CD4-positive, alpha-beta T cell (primary cell): ENCODE measurements at regions of chr1 and their contacts with region 1.

Region 1: GRCh38 chr1:230642263-230642959 is at the start of gene COG2:
- DNase-seq: peak; percentile 85 to 99 (median 96)
- ATAC-seq: peak; percentile 88
- H3K4me3 ChIP-seq: peak within 1 kb of the TSS; percentile 99
- H3K4me3 Mint-ChIP-seq: peak within 1 kb of the TSS; percentile 96
- H3K27ac ChIP-seq: peak within 1 kb of the TSS; percentile 64 to 78
- H3K27ac Mint-ChIP-seq: peak within 1 kb of the TSS; percentile 87
- H3K4me1 ChIP-seq: peaks cover 44% of the 10 kb centered on the region
- H3K4me1 Mint-ChIP-seq: peaks cover 54% of the 10 kb centered on the region
- H3K27me3 ChIP-seq: peaks cover 0 to 7% of the 10 kb centered on the region in 2 experiments
- H3K27me3 Mint-ChIP-seq: peaks cover 26% of the 10 kb centered on the region
- CTCF ChIP-seq: peak; percentile 100
- total RNA-seq, gene COG2: 17.3 to 21.4 TPM

Region 2: DNA sequence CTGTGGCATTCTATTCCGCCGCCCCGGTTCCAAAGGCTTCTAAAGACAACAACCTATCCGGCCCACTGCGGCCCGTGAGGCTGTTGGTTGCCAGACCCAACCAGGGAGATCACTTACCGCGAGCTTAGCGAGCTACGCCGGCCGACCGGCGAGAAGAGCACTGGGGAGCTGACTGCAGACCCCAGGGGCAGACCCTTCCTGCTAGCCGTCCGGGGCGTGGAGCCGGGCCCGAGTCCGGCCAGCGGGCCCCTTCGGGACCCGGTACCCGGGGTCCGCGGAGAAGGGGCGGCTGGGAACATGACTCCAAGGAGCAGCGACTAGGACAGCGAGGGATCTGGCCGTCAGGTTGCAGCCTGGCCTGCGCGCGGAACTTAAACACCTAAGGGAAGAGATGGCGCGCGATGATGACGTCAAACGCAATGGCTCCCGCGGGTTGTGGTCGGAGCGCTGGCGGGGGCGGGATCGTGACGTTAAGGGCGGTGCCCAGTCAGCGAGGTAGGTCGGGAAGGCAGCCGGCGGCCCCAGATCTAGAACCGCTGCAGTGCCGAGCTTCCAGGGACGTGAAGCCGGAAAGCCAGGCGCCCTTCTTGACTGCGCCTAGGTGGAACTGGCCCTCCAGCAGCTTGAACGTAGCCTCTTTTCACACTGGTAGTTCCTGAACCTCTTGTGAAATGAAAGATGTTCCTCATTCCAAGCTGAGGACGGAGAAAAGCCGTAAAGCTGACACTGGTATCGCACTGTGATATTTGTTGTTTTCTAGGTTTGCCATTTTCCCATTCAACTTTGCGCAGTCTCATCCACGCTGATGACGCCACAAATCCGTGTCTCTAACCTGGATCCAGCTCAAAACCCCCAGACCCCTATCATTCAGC is 1134.2 kb before region 1 on chr1 and contains the start of gene NUP133:
- CTCF ChIA-PET with region 1: no interaction called
- POLR2A ChIA-PET with region 1: interaction called, 3 read pairs
- intact Hi-C with region 1: loop called in 1 of 2 experiments (anchors 5 kb)
- DNase-seq: peak; percentile 96 to 100 (median 98)
- ATAC-seq: peak; percentile 97
- H3K4me3 ChIP-seq: peak within 1 kb of the TSS; percentile 98
- H3K4me3 Mint-ChIP-seq: peak within 1 kb of the TSS; percentile 97
- H3K27ac ChIP-seq: peak within 1 kb of the TSS; percentile 90 to 93
- H3K27ac Mint-ChIP-seq: peak within 1 kb of the TSS; percentile 97
- H3K4me1 ChIP-seq: peaks cover 19% of the 10 kb centered on the region
- H3K4me1 Mint-ChIP-seq: peaks cover 33% of the 10 kb centered on the region
- H3K27me3 ChIP-seq: no peaks in the 10 kb centered on the region
- H3K27me3 Mint-ChIP-seq: no peaks in the 10 kb centered on the region
- CTCF ChIP-seq: no peak
- total RNA-seq, gene NUP133: 42.0 to 45.3 TPM

Region 3: DNA sequence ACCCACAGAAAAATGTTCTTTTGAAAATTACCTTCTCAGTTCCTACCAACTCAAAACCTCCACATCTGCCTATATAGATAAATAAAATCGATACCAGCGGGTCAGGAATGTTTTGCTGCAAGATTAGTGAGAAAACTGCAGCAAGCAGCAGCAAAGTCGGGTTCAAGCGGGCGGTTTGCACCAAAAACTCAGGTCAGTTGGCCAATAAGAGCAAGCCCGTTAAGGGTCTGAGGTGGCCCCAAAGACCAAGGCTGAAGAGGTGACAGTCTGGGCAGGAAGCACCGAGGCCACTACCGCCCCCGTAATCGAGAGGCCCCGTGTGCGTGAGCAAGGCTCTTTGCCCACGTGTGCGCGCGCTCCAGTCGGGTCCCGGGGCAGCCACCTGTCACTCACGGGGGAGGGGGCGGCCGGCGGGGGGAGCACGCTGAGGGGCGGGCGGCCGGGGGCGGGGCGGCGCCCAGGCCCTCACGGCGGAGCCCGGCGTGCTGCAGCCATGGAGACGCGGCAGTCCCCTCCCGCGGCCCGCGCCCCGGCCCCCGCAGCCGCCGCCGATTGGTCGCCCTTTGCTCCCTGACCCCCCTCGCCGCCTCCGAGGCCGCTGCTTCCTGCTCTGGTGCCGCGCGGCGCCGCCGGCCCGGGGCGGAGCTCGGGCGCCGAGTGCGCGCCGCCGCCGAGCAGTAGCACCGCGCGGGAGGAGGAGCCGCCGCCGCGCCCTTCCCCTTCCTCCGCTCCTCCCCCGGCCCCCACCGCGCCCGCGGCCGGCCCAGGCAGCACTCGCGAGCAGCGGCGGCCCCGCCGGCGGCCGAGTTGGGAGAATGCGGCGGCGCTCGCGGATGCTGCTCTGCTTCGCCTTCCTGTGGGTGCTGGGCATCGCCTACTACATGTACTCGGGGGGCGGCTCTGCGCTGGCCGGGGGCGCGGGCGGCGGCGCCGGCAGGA is 575.7 kb before region 1 on chr1 and contains the start of gene GALNT2:
- CTCF ChIA-PET with region 1: no interaction called
- POLR2A ChIA-PET with region 1: no interaction called
- intact Hi-C with region 1: loop called in 1 of 2 experiments (anchors 10 kb)
- DNase-seq: peak; percentile 74 to 97 (median 86)
- ATAC-seq: peak; percentile 91
- H3K4me3 ChIP-seq: peak within 1 kb of the TSS; percentile 85
- H3K4me3 Mint-ChIP-seq: peak within 1 kb of the TSS; percentile 97
- H3K27ac ChIP-seq: peak within 1 kb of the TSS; percentile 46 to 73
- H3K27ac Mint-ChIP-seq: peak within 1 kb of the TSS; percentile 93
- H3K4me1 ChIP-seq: peaks cover 15% of the 10 kb centered on the region
- H3K4me1 Mint-ChIP-seq: peaks cover 42% of the 10 kb centered on the region
- H3K27me3 ChIP-seq: no peaks in the 10 kb centered on the region
- H3K27me3 Mint-ChIP-seq: no peaks in the 10 kb centered on the region
- CTCF ChIP-seq: no peak
- total RNA-seq, gene GALNT2: 11.0 to 11.4 TPM

Region 4: DNA sequence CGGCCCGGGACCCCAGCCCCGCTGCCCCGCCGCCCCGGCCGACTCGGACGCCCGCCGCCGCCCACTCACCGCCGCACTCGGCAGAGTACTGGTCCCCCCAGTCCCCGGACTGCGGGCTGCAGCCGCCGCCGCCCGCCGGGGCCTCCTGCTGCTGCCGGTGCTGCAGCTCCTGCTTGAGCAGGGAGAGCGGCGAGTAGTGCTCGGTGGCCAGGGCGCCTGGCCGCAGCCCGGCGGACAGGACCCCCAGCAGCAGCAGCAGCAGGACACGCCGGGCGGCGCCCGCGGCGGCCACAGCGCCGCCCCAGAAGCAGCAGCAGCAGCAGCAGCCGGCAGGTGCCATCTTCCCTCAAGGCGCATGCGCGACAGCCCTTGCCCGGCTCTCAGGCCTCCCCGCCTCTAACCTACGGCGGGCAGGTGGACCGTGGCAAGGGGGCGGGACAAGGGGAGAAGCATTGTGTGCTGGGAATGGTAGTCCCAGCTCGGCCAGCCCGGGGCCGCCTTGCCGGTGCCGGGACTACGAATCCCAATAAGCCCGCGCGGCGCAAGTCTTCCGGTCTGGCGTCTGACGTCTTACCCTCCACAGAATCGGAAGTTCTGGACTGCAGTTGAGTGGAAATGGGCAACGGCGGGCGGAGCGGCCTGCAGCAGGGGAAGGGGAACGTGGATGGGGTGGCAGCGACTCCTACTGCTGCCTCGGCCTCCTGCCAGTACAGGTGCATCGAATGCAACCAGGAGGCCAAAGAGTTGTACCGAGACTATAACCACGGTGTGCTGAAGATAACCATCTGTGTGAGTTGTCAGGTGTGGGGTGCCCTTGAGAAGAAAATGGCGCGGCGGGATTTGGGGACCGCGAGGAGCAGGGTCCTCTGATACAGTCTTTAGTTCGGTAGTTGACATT is 336.3 kb after region 1 on chr1 and contains the starts of genes ARV1 and TTC13:
- CTCF ChIA-PET with region 1: interaction called, 3 read pairs
- POLR2A ChIA-PET with region 1: no interaction called
- intact Hi-C with region 1: loop called (anchors 2 to 10 kb)
- DNase-seq: peak; percentile 89 to 99 (median 96)
- ATAC-seq: peak; percentile 89
- H3K4me3 ChIP-seq: peak within 1 kb of the TSS; percentile 84
- H3K4me3 Mint-ChIP-seq: peak within 1 kb of the TSS; percentile 99
- H3K27ac ChIP-seq: peak within 1 kb of the TSS; percentile 76 to 78
- H3K27ac Mint-ChIP-seq: peak within 1 kb of the TSS; percentile 94
- H3K4me1 ChIP-seq: peaks cover 50% of the 10 kb centered on the region
- H3K4me1 Mint-ChIP-seq: peaks cover 35% of the 10 kb centered on the region
- H3K27me3 ChIP-seq: no peaks in the 10 kb centered on the region
- H3K27me3 Mint-ChIP-seq: no peaks in the 10 kb centered on the region
- CTCF ChIP-seq: peak; percentile 71
- total RNA-seq, gene ARV1: 1.5 to 1.8 TPM
- total RNA-seq, gene TTC13: 24.9 to 25.0 TPM

Region 5: DNA sequence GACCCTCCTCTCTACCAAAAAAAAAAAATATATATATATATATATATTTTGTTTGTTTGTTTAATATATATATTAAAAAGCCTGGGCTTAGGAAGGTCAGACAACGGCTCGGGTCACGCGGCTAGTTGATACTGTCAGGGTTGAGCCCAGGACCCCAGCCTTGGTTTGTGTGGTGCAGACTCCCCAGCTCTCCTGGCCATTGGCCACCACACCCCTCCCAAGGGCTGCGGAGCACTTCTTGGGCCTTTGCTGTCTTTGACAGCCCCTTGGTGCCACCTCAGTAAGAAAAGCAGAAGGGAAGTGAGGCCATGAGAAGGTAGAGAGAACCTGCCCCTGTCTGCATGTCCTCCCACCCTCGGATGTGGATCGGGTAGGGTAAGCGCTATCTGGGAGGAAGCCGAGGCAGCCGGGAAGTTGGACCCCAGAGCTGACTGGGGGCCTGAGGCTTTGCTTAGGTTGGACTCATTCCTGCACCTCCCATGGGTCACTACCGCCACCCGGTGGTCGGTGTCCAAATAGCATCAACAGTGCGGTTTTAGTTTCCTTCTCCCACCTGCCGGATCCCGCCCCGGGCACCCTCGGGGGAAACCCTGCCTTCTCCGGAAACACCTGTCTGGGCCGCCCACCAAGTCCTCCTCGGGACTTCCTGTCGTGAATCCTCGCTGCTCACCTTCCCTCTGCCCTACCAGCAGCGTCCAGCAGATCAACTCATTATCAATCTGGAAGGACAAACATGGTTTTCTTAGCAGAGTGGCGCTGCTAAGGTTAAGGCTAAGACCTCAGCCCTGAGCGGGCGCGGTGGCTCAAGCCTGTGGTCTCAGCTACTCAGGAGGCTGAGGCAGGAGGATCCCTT is 568.8 kb after region 1 on chr1:
- CTCF ChIA-PET with region 1: no interaction called
- POLR2A ChIA-PET with region 1: no interaction called
- intact Hi-C with region 1: loop called (anchors 5 kb)
- DNase-seq: peak; percentile 77 to 93 (median 88)
- ATAC-seq: peak; percentile 96
- H3K4me3 ChIP-seq: peak overlapping the region; percentile 48
- H3K4me3 Mint-ChIP-seq: peak overlapping the region; percentile 89
- H3K27ac ChIP-seq: no peak overlapping the region
- H3K27ac Mint-ChIP-seq: peak overlapping the region; percentile 5
- H3K4me1 ChIP-seq: peaks cover 11% of the 10 kb centered on the region
- H3K4me1 Mint-ChIP-seq: peaks cover 11% of the 10 kb centered on the region
- H3K27me3 ChIP-seq: no peaks in the 10 kb centered on the region
- H3K27me3 Mint-ChIP-seq: no peaks in the 10 kb centered on the region
- CTCF ChIP-seq: peak; percentile 90

Region 6: GRCh38 chr1:231337472-231338269 is 695.3 kb after region 1 on chr1 and contains the start of gene EXOC8:
- CTCF ChIA-PET with region 1: no interaction called
- POLR2A ChIA-PET with region 1: interaction called, 6 read pairs
- intact Hi-C with region 1: loop called in 1 of 2 experiments (anchors 5 kb)
- DNase-seq: peak; percentile 95 to 99 (median 96)
- ATAC-seq: peak; percentile 75
- H3K4me3 ChIP-seq: peak within 1 kb of the TSS; percentile 97
- H3K4me3 Mint-ChIP-seq: peak within 1 kb of the TSS; percentile 99
- H3K27ac ChIP-seq: peak within 1 kb of the TSS; percentile 98 to 100
- H3K27ac Mint-ChIP-seq: peak within 1 kb of the TSS; percentile 100
- H3K4me1 ChIP-seq: peaks cover 47% of the 10 kb centered on the region
- H3K4me1 Mint-ChIP-seq: peaks cover 76% of the 10 kb centered on the region
- H3K27me3 ChIP-seq: no peaks in the 10 kb centered on the region
- H3K27me3 Mint-ChIP-seq: peaks cover 5% of the 10 kb centered on the region
- CTCF ChIP-seq: peak; percentile 33
- total RNA-seq, gene EXOC8: 28.0 to 31.9 TPM

Region 7: GRCh38 chr1:231528172-231529029 is 886.0 kb after region 1 on chr1 and contains the start of gene TSNAX:
- CTCF ChIA-PET with region 1: no interaction called
- POLR2A ChIA-PET with region 1: interaction called, 3 read pairs
- intact Hi-C with region 1: loop called in 1 of 2 experiments (anchors 2 kb)
- DNase-seq: peak; percentile 81 to 96 (median 88)
- ATAC-seq: peak; percentile 85
- H3K4me3 ChIP-seq: peak within 1 kb of the TSS; percentile 70
- H3K4me3 Mint-ChIP-seq: peak within 1 kb of the TSS; percentile 94
- H3K27ac ChIP-seq: peak within 1 kb of the TSS; percentile 84 to 89
- H3K27ac Mint-ChIP-seq: peak within 1 kb of the TSS; percentile 97
- H3K4me1 ChIP-seq: peaks cover 38% of the 10 kb centered on the region
- H3K4me1 Mint-ChIP-seq: peaks cover 46% of the 10 kb centered on the region
- H3K27me3 ChIP-seq: no peaks in the 10 kb centered on the region
- H3K27me3 Mint-ChIP-seq: no peaks in the 10 kb centered on the region
- CTCF ChIP-seq: no peak
- total RNA-seq, gene TSNAX: 33.5 to 35.7 TPM